Stomach (tissue), 19 donors: ENCODE measurements at regions of chr1 and their contacts with region 1.

Region 1: DNA sequence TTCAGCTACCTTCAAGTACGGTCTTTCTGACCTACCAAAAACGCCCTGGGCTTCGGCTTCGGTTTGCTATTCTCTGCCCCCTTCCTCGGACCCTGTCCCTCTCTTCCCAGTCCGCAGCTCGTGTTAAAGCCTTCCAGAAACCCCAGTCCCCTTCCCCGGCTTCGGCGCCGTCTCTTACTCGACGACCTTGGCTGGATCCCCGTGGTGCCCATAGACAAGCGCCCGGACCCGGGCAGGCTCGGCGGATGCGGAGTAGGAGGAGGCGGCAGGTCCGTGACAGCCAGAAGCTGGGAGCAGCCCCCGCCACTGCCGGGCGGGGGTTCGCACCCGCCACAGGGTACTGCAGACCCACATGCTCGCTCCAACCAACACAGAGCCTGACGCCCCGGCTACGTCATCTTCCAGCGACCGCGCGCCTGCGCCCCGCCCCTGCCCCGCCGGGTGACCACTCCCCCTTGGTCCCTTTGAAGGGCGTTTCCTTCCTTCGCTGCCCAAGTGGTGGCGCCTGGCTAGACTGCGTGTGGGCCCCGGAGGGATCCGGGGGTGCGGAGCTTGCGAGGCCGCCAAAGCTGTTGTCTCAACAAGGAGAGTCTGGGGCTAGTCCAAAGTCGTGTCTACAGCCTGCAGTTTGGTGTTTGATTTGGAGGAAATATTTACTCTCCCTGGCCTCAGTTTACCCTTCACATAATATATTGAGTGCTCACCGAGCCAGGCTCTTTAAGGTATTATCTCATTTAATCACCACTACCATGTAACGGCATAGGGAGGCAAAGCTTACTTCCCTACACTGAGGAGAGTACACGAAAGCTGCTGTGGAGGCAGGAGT is at the start of gene MECR:
- DNase-seq: peak; percentile 95 to 98
- H3K4me3 ChIP-seq: peak within 1 kb of the TSS; percentile 73 to 95 (median 90)
- H3K27ac ChIP-seq: peak within 1 kb of the TSS; percentile 66 to 89 (median 82)
- H3K4me1 ChIP-seq: peaks cover 9 to 22% (median 20%) of the 10 kb centered on the region in 4 donors
- H3K27me3 ChIP-seq: no peaks in the 10 kb centered on the region
- CTCF ChIP-seq: no peak
- EP300 ChIP-seq: no peak
- POLR2A ChIP-seq: no peak
- total RNA-seq, gene MECR: 8.9 to 47.8 (median 17.4) TPM

Region 2: DNA sequence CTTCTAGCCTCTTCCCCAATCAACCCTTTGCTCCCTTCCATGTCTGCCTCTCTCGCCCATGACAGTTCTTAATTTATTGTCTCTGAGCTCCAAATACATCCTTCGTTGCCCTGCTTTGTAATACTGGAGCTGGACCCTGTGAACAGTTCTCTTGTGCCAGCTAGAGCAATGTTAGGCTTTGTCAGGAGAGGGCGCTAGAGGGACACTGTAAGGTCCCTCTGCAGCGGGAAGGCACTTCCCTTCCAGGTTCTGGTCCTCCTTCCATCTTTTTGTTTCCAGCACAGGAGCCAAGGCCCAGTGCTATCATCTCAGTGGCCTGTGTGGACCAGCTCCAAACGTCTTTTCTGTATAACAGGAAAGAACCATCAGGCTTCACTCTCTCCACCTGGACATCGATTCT is 101.4 kb after region 1 on chr1:
- intact Hi-C with region 1: no loop called
- DNase-seq: peak in 1 of 2 donors; percentile 49
- H3K4me3 ChIP-seq: no peak overlapping the region
- H3K27ac ChIP-seq: no peak overlapping the region
- H3K4me1 ChIP-seq: no peaks in the 10 kb centered on the region
- H3K27me3 ChIP-seq: peaks cover 0 to 3% (median 0%) of the 10 kb centered on the region in 3 donors
- CTCF ChIP-seq: no peak
- EP300 ChIP-seq: no peak
- POLR2A ChIP-seq: no peak

Region 3: DNA sequence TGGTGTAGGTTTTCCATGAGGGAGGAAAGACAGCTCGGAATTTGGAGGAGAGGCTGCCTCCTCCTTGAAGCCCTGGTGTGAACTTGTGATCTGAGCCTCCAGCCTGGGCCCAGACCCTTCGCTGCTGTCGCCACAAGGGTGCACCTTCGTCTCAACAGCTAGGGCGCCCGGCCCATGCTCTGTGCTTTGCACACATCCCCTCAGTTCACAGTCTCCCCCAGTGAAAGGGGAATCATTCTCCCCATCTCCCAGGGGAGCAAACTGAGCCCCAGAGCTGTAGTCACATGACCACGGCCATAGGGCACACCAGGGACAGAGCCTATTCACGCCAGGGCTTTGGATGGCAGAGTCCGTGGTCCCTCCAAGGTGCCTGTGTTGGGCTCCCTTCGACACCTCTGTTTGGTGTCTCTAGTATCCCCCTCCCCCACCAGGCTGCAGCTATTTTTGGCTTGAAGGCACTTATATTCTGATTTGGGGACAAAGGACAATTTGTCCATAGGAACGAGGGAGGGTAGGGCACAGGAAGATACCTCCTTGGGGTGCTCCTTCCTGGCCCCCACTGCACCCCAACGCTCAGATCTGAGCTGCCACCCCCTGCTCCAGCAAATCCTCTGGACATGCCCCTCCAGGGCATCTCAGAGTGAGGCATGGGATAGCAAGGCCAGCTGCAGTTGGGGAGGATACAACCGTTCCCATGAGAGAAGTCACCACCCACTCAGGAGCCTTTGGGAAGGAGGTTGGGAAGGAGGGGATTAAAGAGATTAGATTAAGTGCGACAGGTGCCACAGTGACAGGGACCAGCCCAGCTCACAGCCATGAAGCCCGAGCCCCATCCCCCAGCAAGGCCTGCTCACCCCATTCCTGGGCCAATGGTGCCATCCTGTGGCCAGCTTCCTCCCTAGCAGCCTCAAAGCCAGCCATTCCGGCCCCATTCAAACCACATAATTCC is 1476.9 kb after region 1 on chr1:
- intact Hi-C with region 1: loop called (anchors 10 kb)
- DNase-seq: peak; percentile 70 to 90
- H3K4me3 ChIP-seq: no peak overlapping the region
- H3K27ac ChIP-seq: no peak overlapping the region
- H3K4me1 ChIP-seq: peaks cover 0 to 20% (median 9%) of the 10 kb centered on the region in 4 donors
- H3K27me3 ChIP-seq: peaks cover 0 to 17% (median 0%) of the 10 kb centered on the region in 3 donors
- CTCF ChIP-seq: peak in 5 of 7 experiments; percentile 54 to 92 (median 73)
- EP300 ChIP-seq: no peak
- POLR2A ChIP-seq: no peak